ENCODE measurements at regions of chr17 and their contacts with region 1.

Region 1: DNA sequence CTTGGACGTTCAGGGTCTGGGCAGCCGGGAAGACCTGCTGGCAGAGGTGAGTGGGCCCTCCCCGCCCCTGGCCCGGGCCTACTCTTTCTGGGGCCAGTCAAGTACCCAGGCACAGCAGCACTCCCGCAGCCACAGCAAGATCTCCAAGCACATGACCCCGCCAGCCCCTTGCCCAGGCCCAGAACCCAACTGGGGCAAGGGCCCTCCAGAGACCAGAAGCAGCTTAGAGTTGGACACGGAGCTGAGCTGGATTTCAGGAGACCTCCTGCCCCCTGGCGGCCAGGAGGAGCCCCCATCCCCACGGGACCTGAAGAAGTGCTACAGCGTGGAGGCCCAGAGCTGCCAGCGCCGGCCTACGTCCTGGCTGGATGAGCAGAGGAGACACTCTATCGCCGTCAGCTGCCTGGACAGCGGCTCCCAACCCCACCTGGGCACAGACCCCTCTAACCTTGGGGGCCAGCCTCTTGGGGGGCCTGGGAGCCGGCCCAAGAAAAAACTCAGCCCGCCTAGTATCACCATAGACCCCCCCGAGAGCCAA is 8.6 kb upstream of the ABCC3 start:
- DNase-seq: peak; percentile 38
- H3K4me3 Mint-ChIP-seq: no peak overlapping the region
- H3K27ac Mint-ChIP-seq: no peak overlapping the region
- H3K4me1 Mint-ChIP-seq: peaks cover 4% of the 10 kb centered on the region
- H3K27me3 Mint-ChIP-seq: peaks cover 40% of the 10 kb centered on the region

Region 2: DNA sequence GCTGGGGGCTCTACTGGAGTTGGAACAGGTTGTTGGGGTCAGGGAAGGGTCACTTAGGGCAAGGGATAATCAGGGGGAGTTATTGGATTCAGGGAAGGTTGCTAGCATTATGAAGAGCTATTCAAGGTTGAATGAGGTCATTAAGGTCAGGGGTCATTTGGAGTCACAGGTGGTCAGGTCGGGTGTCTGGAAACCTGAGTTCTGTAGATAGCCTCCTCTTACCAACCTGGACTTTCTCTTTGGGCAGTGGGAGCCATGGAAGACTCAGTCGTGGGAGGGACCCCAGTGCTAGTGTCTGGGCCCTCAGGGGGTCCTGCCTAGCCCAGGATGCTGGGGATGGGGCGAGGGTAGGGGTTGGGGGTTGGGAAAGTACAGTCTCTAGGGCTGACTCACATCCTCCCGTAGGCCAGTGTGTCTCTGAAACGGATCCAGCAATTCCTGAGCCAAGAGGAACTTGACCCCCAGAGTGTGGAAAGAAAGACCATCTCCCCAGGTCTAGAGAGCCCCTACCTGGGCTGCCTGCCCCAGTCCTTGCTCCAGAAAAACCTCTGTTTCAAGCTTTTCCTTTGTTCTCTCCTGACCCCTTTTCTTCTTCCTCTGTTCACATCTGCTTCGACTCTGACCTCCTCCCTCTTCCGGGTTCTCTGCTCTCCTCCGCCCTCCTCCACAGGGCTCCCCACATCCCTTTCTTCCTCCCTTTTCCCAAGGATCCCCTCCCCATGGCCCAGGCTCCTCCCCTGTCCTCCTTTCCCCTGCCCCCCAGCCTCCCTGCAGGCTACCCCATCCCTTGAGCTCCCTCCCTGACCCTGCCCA is 42.1 kb after region 1 on chr17:
- intact Hi-C with region 1: no loop called
- DNase-seq: no peak
- H3K4me3 Mint-ChIP-seq: no peak overlapping the region
- H3K27ac Mint-ChIP-seq: no peak overlapping the region
- H3K4me1 Mint-ChIP-seq: peaks cover 1% of the 10 kb centered on the region
- H3K27me3 Mint-ChIP-seq: peaks cover 1% of the 10 kb centered on the region

Region 3: DNA sequence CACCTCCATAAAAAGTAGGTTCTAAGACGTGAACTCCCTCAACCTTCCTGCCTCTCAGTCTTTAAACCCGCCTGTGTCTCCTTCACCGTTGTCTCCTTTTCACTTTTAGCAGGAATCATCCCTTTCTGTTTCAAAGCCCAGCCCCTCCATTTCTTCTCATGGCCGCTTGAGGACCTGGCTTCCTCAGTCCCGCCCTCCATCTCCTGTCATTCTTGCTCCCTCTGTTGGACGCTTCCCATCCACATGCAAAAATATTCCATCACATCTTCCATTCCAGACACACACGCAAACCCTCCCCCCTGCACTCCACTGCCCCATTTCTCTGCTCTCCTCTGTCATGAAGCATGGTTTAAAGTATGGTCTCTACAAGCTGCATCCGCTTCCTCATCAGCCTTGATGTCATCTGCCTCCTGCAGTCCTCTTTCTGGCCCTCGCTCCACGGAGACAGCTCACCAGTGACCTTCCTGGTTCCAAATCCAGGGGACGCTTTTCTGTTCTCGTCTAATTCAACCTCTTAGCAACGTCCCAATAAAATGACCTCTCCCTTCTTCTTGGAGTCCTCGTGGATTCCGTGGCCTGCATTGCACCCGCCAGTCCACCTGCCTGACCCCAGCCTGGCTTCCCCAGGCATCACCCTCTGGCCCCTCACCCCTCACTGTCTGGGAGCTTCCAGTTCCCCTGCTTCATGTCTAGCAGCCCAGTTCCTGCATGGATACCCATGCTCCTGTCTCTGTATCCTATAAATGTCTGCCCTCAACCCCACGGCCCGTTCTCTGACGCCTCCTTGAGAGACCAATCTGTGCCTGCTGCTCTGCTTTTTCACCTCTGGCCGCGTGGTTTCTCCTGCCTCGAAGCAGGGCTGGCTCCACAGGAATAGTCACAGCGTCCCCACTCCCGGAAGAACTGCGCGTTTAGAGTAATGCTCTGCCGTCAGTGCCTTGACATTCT is 55.4 kb after region 1 on chr17:
- intact Hi-C with region 1: loop called (anchors 5 kb)
- DNase-seq: no peak
- H3K4me3 Mint-ChIP-seq: no peak overlapping the region
- H3K27ac Mint-ChIP-seq: no peak overlapping the region
- H3K4me1 Mint-ChIP-seq: peaks cover 7% of the 10 kb centered on the region
- H3K27me3 Mint-ChIP-seq: peaks cover 17% of the 10 kb centered on the region

Region 4: DNA sequence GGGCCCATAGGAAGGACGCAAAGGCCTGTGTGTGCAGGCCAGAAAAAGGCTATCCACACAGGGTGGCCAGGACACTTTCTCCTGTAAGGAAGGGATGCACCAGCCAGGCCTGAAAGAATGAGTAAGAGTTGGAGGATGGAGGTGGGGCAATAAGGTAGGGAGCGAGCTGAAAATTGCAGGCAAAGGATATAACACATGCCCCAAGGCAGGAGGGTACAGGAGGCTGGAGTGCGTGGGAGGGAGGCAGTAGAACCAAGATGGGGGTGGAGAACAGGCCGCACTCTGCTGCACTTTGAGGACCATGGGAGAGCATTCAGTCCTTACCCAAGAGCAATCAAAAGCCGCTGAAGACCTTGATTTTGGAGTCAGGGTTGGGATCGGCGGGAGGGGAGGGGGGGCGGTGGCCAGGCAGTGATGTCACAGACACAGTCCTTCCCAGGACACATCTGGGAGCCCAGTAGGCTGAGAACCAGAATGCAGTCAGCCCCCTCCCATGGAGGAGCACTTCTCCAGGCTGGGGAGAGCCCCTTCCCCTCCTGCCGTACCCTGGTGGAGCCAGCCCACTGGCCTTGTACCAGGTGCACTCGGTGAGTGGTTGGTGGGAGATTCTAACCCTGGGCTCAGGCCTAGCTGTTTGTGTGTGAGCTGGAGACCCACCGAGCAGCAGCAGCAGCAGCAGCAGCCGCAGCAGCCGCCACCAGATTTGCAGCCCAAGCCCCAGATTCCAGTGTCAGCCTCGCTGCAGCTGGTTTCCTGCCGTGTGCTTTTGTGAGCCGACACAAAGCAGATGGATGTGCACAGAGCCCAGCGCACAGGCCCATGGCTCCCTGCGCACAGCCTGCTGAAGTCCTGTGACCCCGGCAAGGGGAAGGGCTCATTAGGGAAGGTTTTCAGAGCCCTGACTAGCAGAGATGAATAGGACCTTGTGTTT is 64.1 kb after region 1 on chr17:
- intact Hi-C with region 1: loop called (anchors 1 kb)
- DNase-seq: no peak
- H3K4me3 Mint-ChIP-seq: no peak overlapping the region
- H3K27ac Mint-ChIP-seq: no peak overlapping the region
- H3K4me1 Mint-ChIP-seq: no peaks in the 10 kb centered on the region
- H3K27me3 Mint-ChIP-seq: no peaks in the 10 kb centered on the region

Region 5: DNA sequence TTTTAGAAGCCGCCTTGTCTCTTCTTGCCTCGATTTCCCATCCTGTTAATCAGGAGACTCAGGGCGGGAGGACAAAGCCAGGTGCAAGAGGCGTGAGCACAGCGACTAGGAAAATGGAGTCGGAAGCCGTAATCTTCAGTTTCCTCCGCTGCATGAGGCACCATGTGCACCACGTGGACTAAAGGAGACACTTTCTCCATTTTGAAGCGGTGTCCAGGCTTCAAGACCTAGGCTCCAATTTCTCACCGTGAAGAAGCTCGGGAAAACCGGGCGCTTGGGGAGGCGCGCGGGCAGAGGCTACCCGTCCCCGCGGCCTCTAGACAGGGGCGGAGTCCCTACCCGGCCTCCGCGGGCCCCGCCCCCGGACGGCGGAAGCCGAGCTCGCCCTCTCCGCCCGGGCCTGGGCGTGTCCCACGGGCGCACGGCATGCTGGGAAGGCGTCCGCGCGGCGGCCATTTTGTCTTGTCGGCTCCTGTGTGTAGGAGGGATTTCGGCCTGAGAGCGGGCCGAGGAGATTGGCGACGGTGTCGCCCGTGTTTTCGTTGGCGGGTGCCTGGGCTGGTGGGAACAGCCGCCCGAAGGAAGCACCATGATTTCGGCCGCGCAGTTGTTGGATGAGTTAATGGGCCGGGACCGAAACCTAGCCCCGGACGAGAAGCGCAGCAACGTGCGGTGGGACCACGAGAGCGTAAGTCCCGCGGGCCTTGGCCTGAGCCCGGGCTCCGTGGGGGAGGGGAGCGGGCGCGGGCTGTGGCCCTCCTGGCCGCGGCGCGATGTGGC is 93.2 kb after region 1 on chr17 and contains the start of gene LUC7L3:
- intact Hi-C with region 1: no loop called
- DNase-seq: peak; percentile 95
- H3K4me3 Mint-ChIP-seq: peak within 1 kb of the TSS; percentile 88
- H3K27ac Mint-ChIP-seq: peak within 1 kb of the TSS; percentile 98
- H3K4me1 Mint-ChIP-seq: peaks cover 28% of the 10 kb centered on the region
- H3K27me3 Mint-ChIP-seq: no peaks in the 10 kb centered on the region
- total RNA-seq, gene LUC7L3: 118 and 123 TPM in 2 replicates

Region 6: GRCh38 chr17:51166197-51166986 is 540.3 kb after region 1 on chr17 and contains the start of gene NME2:
- intact Hi-C with region 1: no loop called
- DNase-seq: peak; percentile 69
- H3K4me3 Mint-ChIP-seq: peak within 1 kb of the TSS; percentile 98
- H3K27ac Mint-ChIP-seq: peak within 1 kb of the TSS; percentile 98
- H3K4me1 Mint-ChIP-seq: peaks cover 32% of the 10 kb centered on the region
- H3K27me3 Mint-ChIP-seq: peaks cover 1% of the 10 kb centered on the region
- total RNA-seq, gene NME2: 664 and 674 TPM in 2 replicates

Measured in activated T-helper 1 cell treated with anti-CD3 and anti-CD28 coated beads, Interleukin-12 subunit alpha, Interleukin-12 subunit beta, Interleukin-2, Interleukin-4 antibody, amounts not matched to agents 30 ng/mL and 10 ng/mL and 1 ng/mL, durations not matched to agents 14 hours and 24 hours and 36 hours (primary cell).